ENCODE measurements at regions of chr3 and their contacts with region 1.

Region 1: DNA sequence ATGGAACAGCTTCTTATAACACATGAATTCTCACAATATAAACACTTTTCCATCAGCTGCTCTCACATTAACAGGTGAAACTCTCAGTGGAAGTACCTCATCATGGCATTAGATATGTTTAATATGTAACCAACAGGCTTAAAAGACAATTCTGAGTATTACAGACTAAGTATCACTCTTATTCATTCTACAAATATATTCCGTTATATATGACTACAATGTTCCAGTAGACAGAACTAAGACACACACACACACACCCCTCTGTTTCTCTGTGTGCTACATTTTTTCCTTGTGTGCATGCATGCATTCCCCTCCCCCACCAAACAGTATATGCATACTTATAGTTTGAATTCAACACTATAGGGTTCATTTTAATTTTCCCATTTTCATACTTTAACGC is 32.4 kb downstream of the MRPL3 start:
- DNase-seq: no peak
- H3K4me3 Mint-ChIP-seq: no peak overlapping the region
- H3K27ac Mint-ChIP-seq: peak overlapping the region; percentile 20
- H3K4me1 Mint-ChIP-seq: peaks cover 26% of the 10 kb centered on the region
- H3K27me3 Mint-ChIP-seq: no peaks in the 10 kb centered on the region

Region 2: GRCh38 chr3:131485119-131485518 is 14.7 kb after region 1 on chr3:
- intact Hi-C with region 1: loop called (anchors 1 kb)
- DNase-seq: no peak
- H3K4me3 Mint-ChIP-seq: no peak overlapping the region
- H3K27ac Mint-ChIP-seq: no peak overlapping the region
- H3K4me1 Mint-ChIP-seq: peaks cover 22% of the 10 kb centered on the region
- H3K27me3 Mint-ChIP-seq: no peaks in the 10 kb centered on the region

Region 3: DNA sequence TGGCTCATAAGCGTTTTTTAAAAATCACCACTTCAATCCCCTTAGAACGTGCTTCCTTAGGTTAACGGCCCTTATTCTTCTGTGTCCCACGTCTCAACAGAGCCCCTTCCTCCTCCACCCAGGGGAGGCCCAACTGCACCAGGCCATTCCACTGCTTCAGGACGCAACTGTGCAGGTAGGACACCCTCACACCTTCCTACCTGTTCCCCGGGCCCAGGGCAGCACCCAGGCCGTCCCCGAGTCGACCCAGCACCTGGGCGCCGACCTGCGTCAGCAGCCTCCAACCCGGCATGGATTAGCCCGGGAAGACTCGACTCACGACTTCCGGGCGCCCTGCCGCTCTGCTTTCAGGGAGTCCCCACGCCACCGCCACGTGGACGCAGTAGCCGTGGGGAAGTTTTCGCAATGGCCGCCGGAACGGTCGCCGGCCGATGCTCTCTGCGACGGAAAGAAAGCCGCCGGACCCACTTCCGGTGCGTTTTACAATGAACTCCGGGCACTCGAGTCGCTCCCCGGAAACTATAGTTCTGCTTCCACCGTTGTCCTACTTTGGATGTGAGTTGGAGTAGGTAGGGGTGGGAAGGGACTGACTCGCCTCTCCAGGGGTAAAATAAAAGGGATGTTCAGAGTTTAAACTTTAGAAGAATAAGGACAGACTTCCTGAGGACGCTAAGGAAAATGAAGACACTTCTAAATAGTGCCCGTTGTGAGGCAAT is 32.3 kb after region 1 on chr3 and contains the start of gene MRPL3:
- intact Hi-C with region 1: loop called (anchors 1 kb)
- DNase-seq: peak; percentile 78
- H3K4me3 Mint-ChIP-seq: peak within 1 kb of the TSS; percentile 100
- H3K27ac Mint-ChIP-seq: peak within 1 kb of the TSS; percentile 95
- H3K4me1 Mint-ChIP-seq: peaks cover 50% of the 10 kb centered on the region
- H3K27me3 Mint-ChIP-seq: peaks cover 4% of the 10 kb centered on the region
- total RNA-seq, gene MRPL3: 166 and 175 TPM in 2 replicates